ENCODE measurements at regions of chrX and their contacts with region 1.

Region 1: DNA sequence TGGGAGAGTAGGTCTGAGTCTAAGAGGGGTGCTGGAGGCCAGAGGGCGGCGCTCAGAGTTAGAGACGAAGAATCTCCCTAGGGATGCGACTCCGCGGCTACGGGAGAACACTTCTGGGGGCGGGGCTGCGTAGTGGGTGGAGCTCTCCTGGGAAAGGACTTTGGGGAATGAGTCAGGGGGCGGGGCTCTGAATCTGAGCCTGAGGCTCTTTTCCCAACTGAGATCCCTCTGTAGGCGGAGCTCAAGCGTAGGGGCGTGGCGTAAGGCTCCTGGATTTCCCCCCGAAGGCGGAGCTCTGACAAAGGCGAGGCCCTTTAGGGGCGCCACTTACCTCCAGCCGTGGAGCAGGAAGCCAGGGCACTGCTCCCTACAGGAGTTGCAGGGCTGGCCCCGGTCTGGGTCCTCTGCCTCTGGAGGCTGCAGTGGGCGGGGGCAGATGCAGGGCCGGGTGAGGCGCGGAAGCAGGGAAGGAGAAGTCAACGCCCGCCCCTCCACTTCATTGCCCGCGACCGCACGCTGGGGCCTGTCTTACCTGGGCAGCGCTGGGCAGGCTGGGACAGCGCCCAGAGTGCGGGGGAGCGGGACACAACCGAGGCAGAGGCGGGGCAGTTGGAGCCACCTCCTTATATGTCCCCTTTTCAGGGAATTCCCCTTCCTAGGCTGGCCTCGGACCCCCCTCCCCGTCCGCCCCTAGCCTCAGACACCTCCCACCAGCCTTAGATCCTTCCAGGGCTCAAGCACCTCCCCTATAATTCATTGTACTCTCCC is 1.7 kb downstream of the PRICKLE3 start:
- H3K4me3 ChIP-seq: peak overlapping the region; percentile 28
- H3K27ac ChIP-seq: peak overlapping the region; percentile 64
- H3K4me1 ChIP-seq: peaks cover 2% of the 10 kb centered on the region; the same call in 1 of the 2 replicates
- CTCF ChIP-seq: no peak

Region 2: DNA sequence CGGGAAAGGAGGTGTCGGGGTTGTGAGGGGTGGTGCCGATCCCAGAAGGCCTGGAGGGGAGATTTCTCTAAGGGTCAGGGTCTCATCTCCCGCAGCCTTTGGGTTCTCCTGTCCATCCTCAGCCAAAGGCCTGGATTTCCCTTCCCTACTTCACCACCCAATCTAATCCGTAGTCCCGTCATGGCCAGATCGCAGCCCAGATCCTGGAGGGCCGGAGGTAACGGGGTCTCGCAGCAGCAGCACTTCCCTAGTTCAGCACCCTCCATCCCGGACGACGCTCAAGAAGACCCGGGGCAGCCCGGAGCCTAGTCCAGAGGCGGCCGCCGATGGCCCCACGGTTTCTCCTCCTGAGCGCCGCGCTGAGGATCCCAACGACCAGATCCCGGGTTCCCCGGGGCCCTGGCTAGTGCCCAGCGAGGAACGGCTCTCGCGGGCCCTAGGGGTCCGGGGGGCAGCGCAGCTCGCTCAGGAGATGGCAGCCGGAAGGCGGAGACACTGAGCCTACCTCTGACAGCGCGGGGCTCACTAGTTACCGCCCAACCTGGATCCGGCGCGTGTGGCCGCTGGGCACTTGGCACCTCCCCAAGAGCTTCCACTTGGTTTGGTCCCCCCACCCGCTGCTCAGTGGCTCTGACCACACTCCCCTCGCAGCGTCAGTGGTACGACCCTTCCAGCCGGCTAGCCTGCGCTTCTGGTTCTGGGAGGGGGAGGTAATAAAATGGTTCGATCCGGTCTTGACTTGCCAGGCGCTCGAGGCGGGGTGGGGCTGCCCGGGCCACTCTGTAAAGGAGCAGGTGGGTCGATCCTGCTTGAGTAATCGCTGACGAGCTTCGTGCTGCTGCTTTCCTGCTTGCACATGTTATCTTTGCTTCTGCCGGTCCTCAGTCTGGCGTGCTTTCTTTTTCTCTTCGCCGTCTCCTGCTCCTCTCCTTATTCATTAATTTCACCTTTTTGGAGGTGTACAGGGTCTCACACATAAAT is 18.3 kb before region 1 on chrX:
- CTCF ChIA-PET with region 1: interaction called, 4 read pairs
- POLR2A ChIA-PET with region 1: interaction called, 18 read pairs
- H3K4me3 ChIP-seq: no peak overlapping the region
- H3K27ac ChIP-seq: peak overlapping the region; percentile 77
- H3K4me1 ChIP-seq: peaks cover 7% of the 10 kb centered on the region
- CTCF ChIP-seq: peak; percentile 81

Region 3: GRCh38 chrX:49172280-49172780 is 12.1 kb before region 1 on chrX:
- CTCF ChIA-PET with region 1: interaction called, 3 read pairs
- POLR2A ChIA-PET with region 1: interaction called, 18 read pairs
- H3K4me3 ChIP-seq: peak overlapping the region; percentile 52
- H3K27ac ChIP-seq: peak overlapping the region; percentile 94
- H3K4me1 ChIP-seq: peaks cover under 1% of the 10 kb centered on the region; the same call in 1 of the 2 replicates
- CTCF ChIP-seq: peak; percentile 15; the same call in 1 of the 2 replicates

Region 4: DNA sequence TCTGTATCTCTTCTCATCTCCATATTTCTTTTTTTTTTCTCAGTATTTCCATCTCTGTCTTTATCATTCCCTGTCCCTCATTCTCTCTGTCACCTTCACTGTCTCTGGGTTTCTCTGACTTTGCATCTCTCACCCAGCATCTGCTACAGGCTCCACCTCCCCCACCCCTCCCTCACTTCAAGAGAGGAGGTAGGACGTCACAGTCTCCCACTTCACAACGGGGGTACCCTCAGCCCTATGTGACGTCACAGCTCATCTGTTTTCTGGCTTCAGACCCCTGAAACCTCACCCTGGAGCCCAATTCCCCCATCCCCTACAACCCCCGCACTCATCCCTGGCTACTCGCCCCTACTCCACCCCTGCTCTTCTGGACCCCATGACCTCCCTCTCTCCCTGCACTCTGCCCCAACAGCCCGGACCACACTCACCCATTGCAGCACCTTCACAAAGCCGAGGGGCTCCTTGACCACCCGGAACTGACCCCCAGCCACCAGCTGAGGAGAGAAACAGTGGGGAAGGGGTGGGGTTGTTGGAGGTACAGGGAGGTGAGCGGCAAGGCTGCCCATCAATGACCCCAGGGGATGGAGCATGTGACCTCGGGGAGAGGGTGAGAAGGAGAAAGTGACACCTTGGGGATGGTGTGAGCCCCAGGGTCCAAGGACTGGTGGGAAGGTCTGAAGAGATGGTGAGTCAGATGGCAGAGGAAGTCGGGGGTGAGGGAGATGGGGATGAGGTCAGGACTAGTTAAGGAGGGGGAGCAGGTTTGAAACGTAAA is 14.2 kb after region 1 on chrX:
- CTCF ChIA-PET with region 1: no interaction called
- POLR2A ChIA-PET with region 1: no interaction called
- H3K4me3 ChIP-seq: no peak overlapping the region
- H3K27ac ChIP-seq: no peak overlapping the region
- H3K4me1 ChIP-seq: no peaks in the 10 kb centered on the region
- CTCF ChIP-seq: no peak

Region 5: DNA sequence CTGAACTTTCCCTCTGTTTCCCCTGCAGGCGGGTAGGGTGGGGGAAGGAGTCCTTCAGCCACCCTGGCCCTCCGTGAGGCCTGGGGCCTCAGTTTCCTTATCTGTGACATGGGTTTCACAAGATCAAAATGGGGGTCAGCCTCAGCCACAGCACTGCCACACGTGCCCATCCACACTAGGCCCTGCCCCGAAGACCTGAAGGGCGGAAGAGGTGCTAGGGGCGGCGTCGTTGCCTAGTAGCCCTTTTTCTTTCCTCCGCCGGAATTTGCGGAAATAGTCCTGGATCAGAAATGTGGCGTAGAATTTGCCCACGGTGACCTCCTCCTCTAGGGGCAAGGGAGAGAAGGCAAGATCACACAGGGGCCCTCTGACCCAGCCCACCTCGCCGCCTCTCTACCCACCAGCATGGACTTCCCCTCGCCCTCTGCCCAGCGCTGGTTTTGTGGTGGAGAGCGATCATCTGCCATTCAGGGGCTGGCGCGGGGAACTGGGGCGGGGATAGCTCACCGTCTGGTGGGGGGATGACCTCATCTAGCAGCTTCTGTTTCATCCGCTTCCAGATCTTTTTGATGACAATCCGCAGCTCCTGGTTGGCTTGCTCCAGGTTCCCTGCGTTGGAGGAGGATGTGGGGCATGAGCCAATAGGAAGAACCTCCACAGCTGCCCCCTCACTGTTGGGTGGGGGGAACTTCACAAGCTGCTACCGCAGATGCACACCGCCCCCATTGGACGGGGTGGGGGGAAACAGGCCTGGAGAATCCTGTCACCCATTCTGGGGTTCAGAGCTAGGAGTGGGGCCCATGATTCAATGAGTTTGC is 25.2 kb after region 1 on chrX:
- CTCF ChIA-PET with region 1: no interaction called
- POLR2A ChIA-PET with region 1: no interaction called
- H3K4me3 ChIP-seq: no peak overlapping the region
- H3K27ac ChIP-seq: no peak overlapping the region
- H3K4me1 ChIP-seq: no peaks in the 10 kb centered on the region
- CTCF ChIP-seq: no peak